MCF 10A (cell line): ENCODE measurements at regions of chr5 and their contacts with region 1.

Region 1: DNA sequence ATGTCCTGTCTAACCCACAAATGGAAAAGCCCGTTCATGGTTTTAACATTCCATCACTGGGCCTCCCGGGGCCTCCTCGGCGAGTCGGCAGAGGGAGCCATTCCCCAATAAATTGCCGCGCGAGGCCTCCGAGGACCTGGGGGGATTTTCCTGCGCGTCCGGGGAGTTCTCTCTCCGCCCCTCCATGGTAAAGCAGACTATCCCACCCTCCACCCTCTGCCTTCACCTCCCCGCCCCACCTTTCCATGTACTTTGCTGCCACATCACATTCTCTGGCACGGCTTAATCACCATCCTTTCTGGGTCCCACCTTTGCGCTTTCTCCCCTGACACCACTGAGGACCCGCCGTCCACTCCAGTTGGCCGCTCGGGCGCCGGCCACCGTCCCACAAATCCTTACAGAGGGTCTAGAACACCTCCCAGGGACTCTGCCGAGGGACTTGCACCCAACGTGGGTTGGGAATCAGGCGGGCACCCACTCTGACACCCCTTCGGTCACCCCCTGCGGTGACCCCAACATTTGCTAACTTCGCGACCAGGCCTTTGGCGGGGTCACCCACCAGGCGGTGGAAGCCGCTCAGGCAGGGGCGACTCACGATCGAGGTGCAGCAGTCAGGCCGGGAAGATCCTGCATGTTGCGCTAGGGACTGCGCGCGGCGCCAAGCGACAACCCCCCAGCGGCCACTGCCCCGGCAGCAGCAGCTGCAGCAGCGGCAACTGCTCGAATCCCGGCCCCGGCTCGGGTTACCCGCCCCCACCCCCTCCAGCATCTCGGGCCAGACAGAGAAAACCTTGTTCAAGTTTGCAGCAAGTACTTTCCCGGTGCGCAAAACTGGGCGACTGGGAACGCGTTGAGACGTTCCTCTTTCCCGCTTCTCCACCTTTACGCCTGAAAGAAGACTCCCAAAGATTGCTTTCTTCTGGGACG is at the start of gene MEGF10:
- DNase-seq: peak; percentile 44
- H3K4me3 Mint-ChIP-seq: peak within 1 kb of the TSS; percentile 43
- H3K27ac Mint-ChIP-seq: no peak within 1 kb of the TSS
- H3K4me1 Mint-ChIP-seq: no peaks in the 10 kb centered on the region
- H3K27me3 Mint-ChIP-seq: no peaks in the 10 kb centered on the region
- CTCF ChIP-seq: peak; percentile 74
- total RNA-seq, gene MEGF10: not detected in 2 replicates

Region 2: GRCh38 chr5:127254729-127255284 is 35.5 kb before region 1 on chr5:
- CTCF ChIA-PET with region 1: no interaction called
- POLR2A ChIA-PET with region 1: no interaction called
- intact Hi-C with region 1: no loop called
- DNase-seq: peak; percentile 31
- H3K4me3 Mint-ChIP-seq: no peak overlapping the region
- H3K27ac Mint-ChIP-seq: no peak overlapping the region
- H3K4me1 Mint-ChIP-seq: no peaks in the 10 kb centered on the region
- H3K27me3 Mint-ChIP-seq: no peaks in the 10 kb centered on the region
- CTCF ChIP-seq: no peak

Region 3: GRCh38 chr5:127441799-127442484 is 151.7 kb after region 1 on chr5:
- CTCF ChIA-PET with region 1: interaction called, 10 read pairs
- POLR2A ChIA-PET with region 1: interaction called, 3 read pairs
- intact Hi-C with region 1: loop called (anchors 1 kb)
- DNase-seq: peak; percentile 43
- H3K4me3 Mint-ChIP-seq: no peak overlapping the region
- H3K27ac Mint-ChIP-seq: no peak overlapping the region
- H3K4me1 Mint-ChIP-seq: no peaks in the 10 kb centered on the region
- H3K27me3 Mint-ChIP-seq: peaks cover 12% of the 10 kb centered on the region
- CTCF ChIP-seq: peak; percentile 55